ENCODE measurements at regions of chr12 and their contacts with region 1.

Region 1: GRCh38 chr12:104215638-104216297 is at the start of gene TXNRD1:
- DNase-seq: peak; percentile 58 to 77
- ATAC-seq: peak; percentile 83 to 95
- H3K4me3 ChIP-seq: peak within 1 kb of the TSS; percentile 67 to 73 (median 70)
- H3K27ac ChIP-seq: peak within 1 kb of the TSS; percentile 57 to 72 (median 64)
- H3K4me1 ChIP-seq: peaks cover 10 to 16% of the 10 kb centered on the region in 2 donors
- H3K27me3 ChIP-seq: no peaks in the 10 kb centered on the region
- CTCF ChIP-seq: peak; percentile 75 to 91 (median 81)
- POLR2A ChIP-seq: no peak
- total RNA-seq, gene TXNRD1: 96.6 to 139 (median 118) TPM

Region 2: DNA sequence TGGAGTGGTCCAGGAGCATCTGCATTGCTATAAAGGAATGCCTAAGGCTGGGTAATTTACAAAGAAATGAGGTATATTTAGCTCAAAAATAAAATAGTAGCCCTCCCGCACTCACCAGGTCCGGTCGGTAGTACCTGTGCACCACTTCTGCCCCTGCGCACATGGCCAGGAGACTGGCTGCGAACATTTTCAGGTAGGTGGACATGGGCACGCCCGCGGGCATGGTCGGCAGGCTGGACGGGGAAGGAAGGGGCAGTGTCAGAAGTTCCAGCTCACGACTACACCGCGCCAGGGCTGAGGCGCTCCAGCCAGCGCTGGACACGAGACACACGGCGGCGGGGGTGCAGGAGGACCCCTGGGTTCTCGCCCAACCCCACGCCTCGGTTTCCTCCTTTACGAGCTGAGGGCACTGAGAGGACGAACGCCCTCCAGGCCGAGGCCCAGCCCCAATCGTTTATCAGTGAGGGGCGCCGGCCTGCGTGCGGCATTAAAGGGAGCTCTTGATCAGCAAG is 259.2 kb before region 1 on chr12:
- in situ Hi-C with region 1: no loop called
- intact Hi-C with region 1: no loop called
- DNase-seq: peak in 1 of 2 donors; percentile 34
- ATAC-seq: peak; percentile 36 to 38
- H3K4me3 ChIP-seq: peak overlapping the region; percentile 76 to 87 (median 82)
- H3K27ac ChIP-seq: peak overlapping the region; percentile 81 to 92 (median 92)
- H3K4me1 ChIP-seq: peaks cover 22 to 25% of the 10 kb centered on the region in 2 donors
- H3K27me3 ChIP-seq: no peaks in the 10 kb centered on the region
- CTCF ChIP-seq: no peak
- POLR2A ChIP-seq: no peak

Region 3: GRCh38 chr12:104258476-104259067 is 42.8 kb after region 1 on chr12:
- in situ Hi-C with region 1: no loop called
- intact Hi-C with region 1: loop called (anchors 5 kb)
- DNase-seq: no peak
- ATAC-seq: no peak
- H3K4me3 ChIP-seq: no peak overlapping the region
- H3K27ac ChIP-seq: no peak overlapping the region
- H3K4me1 ChIP-seq: no peaks in the 10 kb centered on the region
- H3K27me3 ChIP-seq: no peaks in the 10 kb centered on the region
- CTCF ChIP-seq: no peak
- POLR2A ChIP-seq: no peak

Region 4: GRCh38 chr12:104303538-104304151 is 87.9 kb after region 1 on chr12 and contains the start of gene EID3:
- in situ Hi-C with region 1: loop called in 1 of 4 experiments (anchors 10 kb)
- intact Hi-C with region 1: loop called (anchors 2 kb)
- DNase-seq: peak; percentile 75 to 82
- ATAC-seq: peak; percentile 87 to 88
- H3K4me3 ChIP-seq: peak within 1 kb of the TSS; percentile 47 to 57 (median 54)
- H3K27ac ChIP-seq: peak within 1 kb of the TSS; percentile 73 to 86 (median 80)
- H3K4me1 ChIP-seq: peaks cover 48 to 64% of the 10 kb centered on the region in 2 donors
- H3K27me3 ChIP-seq: no peaks in the 10 kb centered on the region
- CTCF ChIP-seq: no peak
- POLR2A ChIP-seq: peak; percentile 18 to 43
- total RNA-seq, gene EID3: 0.51 to 3.4 (median 1.00) TPM

Region 5: DNA sequence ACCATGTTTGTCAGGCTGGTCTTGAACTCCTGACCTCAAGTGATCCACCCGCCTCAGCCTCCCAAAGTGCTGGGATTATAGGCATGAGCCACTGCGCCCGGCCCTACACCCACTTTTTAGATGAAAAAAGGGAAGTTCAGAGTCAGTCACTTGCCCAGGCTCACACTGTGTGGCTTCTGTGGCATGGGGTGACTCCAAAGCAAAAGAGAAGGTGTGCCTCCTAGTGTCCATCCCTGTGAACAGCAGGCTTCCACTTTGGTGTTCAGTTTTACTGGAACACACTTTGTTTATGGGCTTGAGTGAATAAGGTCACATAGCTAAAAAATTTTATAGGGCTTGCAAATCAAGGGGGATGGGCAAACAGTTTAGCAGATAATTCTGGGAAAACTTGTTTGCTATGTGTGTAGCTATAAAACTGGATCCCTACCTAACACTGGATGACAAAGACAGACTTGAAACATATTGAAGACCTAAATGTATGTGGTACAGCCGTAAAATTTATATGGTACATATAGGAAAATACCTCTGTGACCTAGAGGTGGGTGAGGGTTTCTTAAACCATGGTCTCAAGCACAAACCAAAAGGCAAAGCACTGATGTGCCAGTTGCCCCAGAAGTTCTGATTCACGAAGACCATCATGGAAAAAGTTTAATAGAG is 142.7 kb after region 1 on chr12:
- in situ Hi-C with region 1: no loop called
- intact Hi-C with region 1: loop called (anchors 1 kb)
- DNase-seq: peak in 1 of 2 donors; percentile 46
- ATAC-seq: peak; percentile 58 to 60
- H3K4me3 ChIP-seq: no peak overlapping the region
- H3K27ac ChIP-seq: no peak overlapping the region
- H3K4me1 ChIP-seq: no peaks in the 10 kb centered on the region
- H3K27me3 ChIP-seq: no peaks in the 10 kb centered on the region
- CTCF ChIP-seq: peak; percentile 64 to 80 (median 69)
- POLR2A ChIP-seq: no peak

Region 6: GRCh38 chr12:105053116-105053572 is 837.4 kb after region 1 on chr12:
- in situ Hi-C with region 1: loop called in 3 of 4 experiments (anchors 25 kb)
- intact Hi-C with region 1: no loop called
- DNase-seq: peak; percentile 14 to 65
- ATAC-seq: peak; percentile 50 to 65
- H3K4me3 ChIP-seq: no peak overlapping the region
- H3K27ac ChIP-seq: no peak overlapping the region
- H3K4me1 ChIP-seq: no peaks in the 10 kb centered on the region
- H3K27me3 ChIP-seq: no peaks in the 10 kb centered on the region
- CTCF ChIP-seq: peak; percentile 57 to 88 (median 71)
- POLR2A ChIP-seq: no peak

Measured in gastrocnemius medialis (tissue), 4 donors.